ENCODE measurements at regions of chr1 and their contacts with region 1.

Region 1: DNA sequence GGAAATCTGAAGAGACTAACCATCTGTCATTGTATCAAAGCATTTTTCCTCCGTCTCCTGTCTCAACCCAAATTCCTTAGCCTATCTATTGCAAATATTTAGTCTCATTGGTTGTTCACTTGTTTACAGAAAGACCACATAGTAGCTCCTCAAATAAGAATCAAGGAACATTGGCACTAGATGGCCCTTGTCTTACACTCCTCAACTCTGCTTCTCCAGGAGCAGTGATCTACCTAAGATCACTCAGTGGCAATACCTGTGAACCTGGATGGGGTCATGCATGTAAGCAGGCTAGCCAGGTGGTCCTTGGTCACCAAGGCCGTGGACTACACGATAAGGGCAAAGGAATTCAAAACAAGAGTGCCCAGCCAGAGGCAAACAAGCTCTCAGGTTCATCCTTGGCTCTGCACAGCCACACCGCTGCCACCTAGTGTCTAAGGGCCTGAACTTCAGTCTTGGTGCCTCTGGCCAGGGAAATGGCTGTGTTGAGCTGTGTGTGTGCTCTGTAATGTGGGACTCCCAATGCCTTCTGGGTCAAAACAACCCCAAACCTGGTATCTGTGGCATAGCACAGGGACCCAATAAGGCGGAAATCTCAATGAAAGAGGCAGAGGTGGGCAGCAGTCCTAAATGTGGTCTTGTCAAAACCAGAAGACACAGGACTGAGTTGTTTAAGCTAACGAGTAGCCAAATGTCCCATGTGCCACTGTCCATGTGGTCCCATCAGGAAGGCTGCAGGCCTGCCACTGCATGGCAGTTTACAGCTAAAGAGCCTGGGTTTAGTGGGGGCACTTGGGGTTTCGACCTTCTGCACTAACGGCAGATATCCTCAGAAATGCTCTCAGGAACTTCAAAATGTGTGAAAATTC is 54.5 kb downstream of the GPR161 start:
- DNase-seq: peak; percentile 61 to 68
- H3K4me3 ChIP-seq: no peak overlapping the region
- H3K27ac ChIP-seq: no peak overlapping the region
- H3K4me1 ChIP-seq: no peaks in the 10 kb centered on the region
- H3K27me3 ChIP-seq: no peaks in the 10 kb centered on the region
- CTCF ChIP-seq: peak; percentile 90

Region 2: DNA sequence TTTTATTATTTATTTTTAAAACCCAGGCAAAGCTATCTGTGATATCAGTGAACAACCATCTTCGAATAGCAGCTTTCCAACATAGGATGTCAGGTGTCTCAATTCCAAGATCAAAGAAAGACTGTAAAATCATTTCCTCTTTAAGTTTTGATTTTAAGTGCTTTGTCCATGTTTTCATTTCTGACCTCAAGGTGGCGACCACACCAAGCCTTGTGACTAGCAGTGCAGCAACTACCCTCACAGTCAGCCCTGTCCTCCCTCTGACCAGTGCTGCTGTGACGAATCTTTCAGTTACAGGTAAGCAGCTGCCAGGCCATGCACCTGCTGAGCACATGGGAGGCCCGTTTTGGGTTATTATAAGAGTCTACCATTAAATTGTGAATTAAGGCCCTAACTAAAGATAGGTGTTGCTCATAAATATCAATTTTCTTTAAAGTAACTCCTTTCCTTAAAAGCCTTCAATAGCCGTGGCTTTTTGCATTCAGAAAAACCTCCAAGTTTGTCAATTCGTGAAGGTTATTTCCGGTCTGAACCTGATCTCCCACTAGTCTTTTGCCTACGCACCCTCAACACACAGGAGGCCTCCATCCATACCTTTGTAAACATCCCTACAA is 680.9 kb before region 1 on chr1:
- CTCF ChIA-PET with region 1: interaction called, 4 read pairs
- POLR2A ChIA-PET with region 1: no interaction called
- intact Hi-C with region 1: loop called (anchors 10 kb)
- DNase-seq: peak; percentile 44 to 54
- H3K4me3 ChIP-seq: no peak overlapping the region
- H3K27ac ChIP-seq: no peak overlapping the region
- H3K4me1 ChIP-seq: peaks cover 12% of the 10 kb centered on the region
- H3K27me3 ChIP-seq: no peaks in the 10 kb centered on the region
- CTCF ChIP-seq: peak; percentile 78

Region 3: DNA sequence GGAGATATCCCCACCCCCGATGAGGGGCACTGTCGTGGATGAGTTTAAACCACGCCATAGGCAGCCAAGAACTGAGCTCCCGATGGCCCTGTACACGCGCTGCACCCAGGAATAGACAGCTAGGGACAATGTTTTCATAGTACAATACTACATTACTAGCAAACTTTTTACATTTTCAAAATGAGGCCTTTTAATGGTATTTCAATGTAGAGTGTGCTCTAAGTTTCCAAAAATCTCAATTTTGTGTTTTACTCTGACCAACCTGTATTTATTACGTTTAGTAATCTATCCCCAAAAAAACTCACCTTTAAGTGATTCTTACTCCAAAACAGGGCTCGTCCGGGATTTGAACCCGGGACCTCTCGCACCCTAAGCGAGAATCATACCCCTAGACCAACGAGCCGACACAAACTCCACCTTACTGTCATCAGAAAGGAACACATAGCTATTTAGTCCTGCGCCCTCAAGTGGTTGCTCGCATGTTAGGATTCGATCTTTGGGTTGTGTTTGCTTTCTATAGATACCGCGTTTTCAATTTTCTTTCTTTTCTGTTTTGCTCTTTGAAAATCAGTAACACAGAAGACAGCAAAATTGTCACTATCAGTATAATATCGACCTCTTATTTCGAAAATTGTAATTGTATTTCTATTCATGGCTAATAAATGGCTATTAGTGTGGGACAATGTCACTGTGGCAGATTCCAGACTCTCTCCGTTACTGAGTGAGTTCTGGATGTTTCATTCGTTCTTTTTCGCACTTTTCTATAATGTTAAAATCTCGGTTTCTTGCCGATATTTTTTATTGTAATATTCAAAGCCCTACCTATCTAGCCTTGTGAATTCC is 366.9 kb before region 1 on chr1:
- CTCF ChIA-PET with region 1: interaction called, 12 read pairs
- POLR2A ChIA-PET with region 1: interaction called, 9 read pairs
- intact Hi-C with region 1: loop called (anchors 1 kb)
- DNase-seq: peak; percentile 81 to 85
- H3K4me3 ChIP-seq: peak overlapping the region; percentile 97
- H3K27ac ChIP-seq: peak overlapping the region; percentile 83
- H3K4me1 ChIP-seq: peaks cover 7% of the 10 kb centered on the region; the same call in 1 of the 2 replicates
- H3K27me3 ChIP-seq: no peaks in the 10 kb centered on the region
- CTCF ChIP-seq: peak; percentile 72

Region 4: GRCh38 chr1:168136709-168137514 is 54.7 kb after region 1 on chr1 and contains the start of gene GPR161:
- CTCF ChIA-PET with region 1: no interaction called
- POLR2A ChIA-PET with region 1: no interaction called
- intact Hi-C with region 1: loop called (anchors 5 kb)
- DNase-seq: peak in 1 of 2 experiments; percentile 43
- H3K4me3 ChIP-seq: peak within 1 kb of the TSS; percentile 78
- H3K27ac ChIP-seq: no peak within 1 kb of the TSS
- H3K4me1 ChIP-seq: peaks cover 20% of the 10 kb centered on the region
- H3K27me3 ChIP-seq: no peaks in the 10 kb centered on the region
- CTCF ChIP-seq: no peak
- total RNA-seq, gene GPR161: 6.0 and 6.7 TPM in 2 replicates

Region 5: DNA sequence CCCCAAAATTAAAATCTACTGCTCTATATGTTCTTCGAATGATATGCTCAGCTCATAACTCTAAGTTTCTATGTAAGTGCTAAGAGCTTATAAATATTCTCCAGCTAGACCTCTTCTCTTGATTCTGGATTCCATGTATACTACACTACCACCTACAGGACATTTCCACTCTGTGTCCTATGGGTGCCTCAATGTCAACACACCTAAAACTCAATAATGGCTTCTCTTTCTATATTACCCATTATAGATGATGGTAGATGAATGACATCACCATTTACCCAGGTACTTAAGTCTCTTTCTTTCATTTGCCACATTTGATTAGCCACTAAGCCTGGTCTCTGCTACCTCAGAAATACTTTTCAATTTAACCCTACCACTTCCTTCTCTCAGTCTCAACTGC is 239.7 kb after region 1 on chr1:
- CTCF ChIA-PET with region 1: no interaction called
- POLR2A ChIA-PET with region 1: no interaction called
- intact Hi-C with region 1: loop called (anchors 5 kb)
- DNase-seq: peak in 1 of 2 experiments; percentile 58
- H3K4me3 ChIP-seq: no peak overlapping the region
- H3K27ac ChIP-seq: no peak overlapping the region
- H3K4me1 ChIP-seq: peaks cover 13% of the 10 kb centered on the region
- H3K27me3 ChIP-seq: no peaks in the 10 kb centered on the region
- CTCF ChIP-seq: peak; percentile 60

Measured in PC-9 (cell line).